GM12878 (cell line): ENCODE measurements at regions of chr1 and their contacts with region 1.

Region 1: GRCh38 chr1:56584910-56585528 is 5.7 kb upstream of the PLPP3 start:
- DNase-seq: no peak
- ATAC-seq: peak; percentile 71
- H3K4me3 ChIP-seq: no peak overlapping the region
- H3K27ac ChIP-seq: no peak overlapping the region
- H3K4me1 ChIP-seq: no peaks in the 10 kb centered on the region
- H3K27me3 ChIP-seq: no peaks in the 10 kb centered on the region
- CTCF ChIP-seq: peak; percentile 71 to 82 (median 78)
- EP300 ChIP-seq: no peak
- POLR2A ChIP-seq: no peak
- RAD21 ChIP-seq: peak; percentile 95

Region 2: DNA sequence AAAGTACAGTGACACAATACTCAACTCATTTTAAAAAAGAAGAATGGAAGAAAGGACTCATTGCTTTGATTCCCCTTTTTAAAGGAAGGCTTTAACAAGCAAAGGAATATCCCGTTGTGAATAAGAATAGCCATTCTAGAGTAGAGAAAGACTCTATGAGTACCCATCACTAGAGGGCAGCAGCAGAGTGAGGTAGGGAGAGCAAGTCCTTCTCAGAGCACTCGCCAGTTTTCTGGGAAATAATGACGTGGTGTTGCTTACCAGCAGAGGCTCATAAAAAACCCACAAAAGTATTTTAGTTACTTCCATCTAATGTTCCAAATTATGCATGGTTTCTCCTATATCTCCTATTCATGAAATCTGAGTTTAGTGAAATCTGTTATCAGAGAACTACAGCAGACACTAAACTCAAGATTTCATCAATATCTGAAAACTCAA is 1444.5 kb before region 1 on chr1:
- CTCF ChIA-PET with region 1: interaction called, 6 read pairs
- POLR2A ChIA-PET with region 1: no interaction called
- RAD21 ChIA-PET with region 1: interaction called, 4 read pairs
- SMC1A ChIA-PET with region 1: interaction called, 7 read pairs
- in situ Hi-C with region 1: no loop called
- intact Hi-C with region 1: loop called (anchors 10 kb)
- DNase-seq: peak; percentile 11
- ATAC-seq: peak; percentile 97
- H3K4me3 ChIP-seq: no peak overlapping the region
- H3K27ac ChIP-seq: no peak overlapping the region
- H3K4me1 ChIP-seq: no peaks in the 10 kb centered on the region
- H3K27me3 ChIP-seq: no peaks in the 10 kb centered on the region
- CTCF ChIP-seq: peak; percentile 70 to 84 (median 75)
- EP300 ChIP-seq: no peak
- POLR2A ChIP-seq: no peak
- RAD21 ChIP-seq: peak; percentile 94

Region 3: DNA sequence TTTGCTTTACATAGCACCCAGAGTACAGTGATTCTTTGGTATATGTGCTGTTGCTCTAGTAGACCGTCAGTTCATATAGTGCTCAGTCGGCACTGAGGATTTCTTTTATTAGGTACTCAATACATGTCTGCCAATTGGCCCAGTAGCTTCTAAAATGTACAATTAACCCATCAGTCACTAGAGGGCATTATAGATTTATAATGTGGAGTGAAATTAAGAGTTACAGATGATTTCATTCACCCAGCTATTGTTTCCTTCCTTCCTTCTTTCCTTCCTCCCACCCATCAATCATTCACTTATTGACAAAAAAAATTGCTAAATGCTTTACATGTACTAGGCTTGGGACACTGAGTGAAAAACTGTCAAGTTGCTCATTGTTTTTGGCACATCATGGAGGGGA is 1106.3 kb before region 1 on chr1:
- CTCF ChIA-PET with region 1: interaction called, 111 read pairs
- POLR2A ChIA-PET with region 1: no interaction called
- RAD21 ChIA-PET with region 1: interaction called, 78 read pairs
- SMC1A ChIA-PET with region 1: interaction called, 91 read pairs
- in situ Hi-C with region 1: loop called (anchors 10 kb)
- intact Hi-C with region 1: loop called (anchors 1 kb)
- DNase-seq: no peak
- ATAC-seq: peak; percentile 69
- H3K4me3 ChIP-seq: no peak overlapping the region
- H3K27ac ChIP-seq: no peak overlapping the region
- H3K4me1 ChIP-seq: no peaks in the 10 kb centered on the region
- H3K27me3 ChIP-seq: 0 out of 4 replicates have a peak, but pooled peaks cover 0 to 1% of the 10 kb centered on the region in 2 experiments
- CTCF ChIP-seq: peak in 2 of 3 experiments; percentile 7 to 34; a peak in 2 of 6 replicates
- EP300 ChIP-seq: no peak
- POLR2A ChIP-seq: no peak
- RAD21 ChIP-seq: no peak

Region 4: GRCh38 chr1:56135069-56135863 is 449.8 kb before region 1 on chr1:
- CTCF ChIA-PET with region 1: interaction called, 22 read pairs
- POLR2A ChIA-PET with region 1: no interaction called
- RAD21 ChIA-PET with region 1: interaction called, 59 read pairs
- SMC1A ChIA-PET with region 1: interaction called, 34 read pairs
- in situ Hi-C with region 1: no loop called
- intact Hi-C with region 1: no loop called
- DNase-seq: no peak
- ATAC-seq: peak; percentile 67
- H3K4me3 ChIP-seq: no peak overlapping the region
- H3K27ac ChIP-seq: peak overlapping the region; percentile 56
- H3K4me1 ChIP-seq: peaks cover 25% of the 10 kb centered on the region
- H3K27me3 ChIP-seq: no peaks in the 10 kb centered on the region
- CTCF ChIP-seq: no peak
- EP300 ChIP-seq: peak in 1 of 2 experiments; percentile 87; a peak in 1 of 4 replicates
- POLR2A ChIP-seq: no peak
- RAD21 ChIP-seq: 0 out of 2 replicates have a peak, but pooled peaks have one; percentile 1

Region 5: GRCh38 chr1:56330391-56331026 is 254.5 kb before region 1 on chr1:
- CTCF ChIA-PET with region 1: interaction called, 17 read pairs
- POLR2A ChIA-PET with region 1: interaction called, 44 read pairs
- RAD21 ChIA-PET with region 1: interaction called, 167 read pairs
- SMC1A ChIA-PET with region 1: interaction called, 114 read pairs
- in situ Hi-C with region 1: no loop called
- intact Hi-C with region 1: no loop called
- DNase-seq: peak; percentile 68
- ATAC-seq: peak; percentile 70
- H3K4me3 ChIP-seq: no peak overlapping the region
- H3K27ac ChIP-seq: no peak overlapping the region
- H3K4me1 ChIP-seq: no peaks in the 10 kb centered on the region; the same call in 1 of the 2 replicates
- H3K27me3 ChIP-seq: no peaks in the 10 kb centered on the region
- CTCF ChIP-seq: no peak
- EP300 ChIP-seq: peak; percentile 41 to 67; a peak in 2 of 4 replicates
- POLR2A ChIP-seq: no peak
- RAD21 ChIP-seq: no peak

Region 6: DNA sequence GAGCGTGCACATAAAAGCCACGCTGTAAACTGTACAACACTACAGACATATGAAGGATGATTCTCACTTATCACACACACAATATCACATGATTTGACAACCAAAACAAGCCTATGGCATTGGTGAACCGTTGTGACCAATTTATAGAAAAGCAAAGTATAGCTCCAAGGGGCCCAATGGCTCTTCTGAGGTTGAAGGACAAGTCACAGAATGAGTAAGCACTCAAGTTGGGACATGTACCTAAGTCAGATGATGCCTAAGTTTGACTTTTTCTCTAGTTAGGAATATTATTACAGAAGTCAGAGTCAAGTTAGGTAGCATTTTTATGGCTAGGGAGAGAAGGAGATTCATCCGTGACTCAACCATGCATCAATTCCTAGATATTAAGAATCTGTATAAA is 51.4 kb before region 1 on chr1:
- CTCF ChIA-PET with region 1: interaction called, 116 read pairs
- POLR2A ChIA-PET with region 1: no interaction called
- RAD21 ChIA-PET with region 1: interaction called, 174 read pairs
- SMC1A ChIA-PET with region 1: interaction called, 80 read pairs
- in situ Hi-C with region 1: no loop called
- intact Hi-C with region 1: no loop called
- DNase-seq: no peak
- ATAC-seq: peak; percentile 82
- H3K4me3 ChIP-seq: no peak overlapping the region
- H3K27ac ChIP-seq: no peak overlapping the region
- H3K4me1 ChIP-seq: peaks cover 2% of the 10 kb centered on the region; the same call in 1 of the 2 replicates
- H3K27me3 ChIP-seq: no peaks in the 10 kb centered on the region
- CTCF ChIP-seq: no peak
- EP300 ChIP-seq: no peak
- POLR2A ChIP-seq: no peak
- RAD21 ChIP-seq: no peak

Region 7: DNA sequence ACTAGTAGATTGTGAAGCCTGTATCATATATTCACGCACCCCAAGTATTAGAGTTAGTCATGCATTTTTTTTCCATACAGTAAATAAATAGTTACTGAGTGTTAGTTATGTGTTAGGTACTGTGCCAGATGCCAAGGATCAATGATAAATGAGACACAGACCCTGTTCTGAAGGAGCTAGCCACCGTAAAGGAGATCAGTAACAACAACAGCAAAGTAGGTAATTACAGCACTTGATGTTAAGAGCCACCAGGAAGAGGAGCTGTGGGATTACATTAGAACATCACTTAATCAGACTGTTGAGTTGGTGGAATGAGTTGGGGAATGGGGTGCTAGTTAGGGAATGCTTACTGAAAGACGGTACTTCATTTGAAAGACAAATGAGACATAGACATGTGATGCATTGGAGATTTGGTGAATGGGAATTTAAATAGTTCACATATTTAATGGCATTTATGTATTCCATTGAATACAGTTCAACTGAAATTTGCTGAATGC is 81.1 kb after region 1 on chr1:
- CTCF ChIA-PET with region 1: no interaction called
- POLR2A ChIA-PET with region 1: no interaction called
- RAD21 ChIA-PET with region 1: no interaction called
- SMC1A ChIA-PET with region 1: no interaction called
- in situ Hi-C with region 1: no loop called
- intact Hi-C with region 1: no loop called
- DNase-seq: no peak
- ATAC-seq: no peak
- H3K4me3 ChIP-seq: no peak overlapping the region
- H3K27ac ChIP-seq: no peak overlapping the region
- H3K4me1 ChIP-seq: no peaks in the 10 kb centered on the region
- H3K27me3 ChIP-seq: no peaks in the 10 kb centered on the region
- CTCF ChIP-seq: no peak
- EP300 ChIP-seq: no peak
- POLR2A ChIP-seq: no peak
- RAD21 ChIP-seq: no peak